Panc1 (cell line): ENCODE measurements at regions of chr4 and their contacts with region 1.

Region 1: DNA sequence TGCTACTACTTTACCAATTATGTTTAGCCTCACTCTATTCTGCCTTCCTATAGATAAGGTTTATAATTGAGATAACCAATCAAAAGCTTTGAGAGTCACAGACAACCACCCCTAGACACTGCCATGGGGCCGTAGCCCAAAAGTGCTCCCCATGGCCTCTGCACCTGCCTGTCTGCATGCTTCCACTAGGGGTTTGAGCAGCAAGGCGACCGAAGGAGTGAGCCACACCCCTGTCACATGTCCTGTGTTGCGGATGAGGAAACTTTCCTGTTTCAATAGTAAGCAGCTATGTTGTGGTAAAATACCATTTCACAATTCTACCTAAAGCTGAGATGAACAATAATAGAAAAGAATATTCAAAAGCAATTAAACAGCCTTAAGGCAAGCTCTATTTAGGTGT is 856.0 kb upstream of the FRG1 start:
- DNase-seq: no peak
- ATAC-seq: no peak
- H3K4me3 ChIP-seq: no peak overlapping the region
- H3K27ac ChIP-seq: no peak overlapping the region
- H3K4me1 ChIP-seq: no peaks in the 10 kb centered on the region
- H3K27me3 ChIP-seq: no peaks in the 10 kb centered on the region
- CTCF ChIP-seq: no peak

Region 2: GRCh38 chr4:188930822-188931221 is 153.8 kb before region 1 on chr4:
- CTCF ChIA-PET with region 1: no interaction called
- POLR2A ChIA-PET with region 1: no interaction called
- in situ Hi-C with region 1: no loop called
- intact Hi-C with region 1: no loop called
- DNase-seq: no peak
- ATAC-seq: no peak
- H3K4me3 ChIP-seq: no peak overlapping the region
- H3K27ac ChIP-seq: no peak overlapping the region
- H3K4me1 ChIP-seq: no peaks in the 10 kb centered on the region
- H3K27me3 ChIP-seq: no peaks in the 10 kb centered on the region
- CTCF ChIP-seq: no peak

Region 3: GRCh38 chr4:189117426-189117825 is 32.8 kb after region 1 on chr4:
- CTCF ChIA-PET with region 1: interaction called, 11 read pairs
- POLR2A ChIA-PET with region 1: no interaction called
- in situ Hi-C with region 1: no loop called
- intact Hi-C with region 1: no loop called
- DNase-seq: no peak
- ATAC-seq: no peak
- H3K4me3 ChIP-seq: no peak overlapping the region
- H3K27ac ChIP-seq: no peak overlapping the region
- H3K4me1 ChIP-seq: no peaks in the 10 kb centered on the region
- H3K27me3 ChIP-seq: no peaks in the 10 kb centered on the region
- CTCF ChIP-seq: no peak